ENCODE measurements at regions of chr2 and their contacts with region 1.

Region 1: DNA sequence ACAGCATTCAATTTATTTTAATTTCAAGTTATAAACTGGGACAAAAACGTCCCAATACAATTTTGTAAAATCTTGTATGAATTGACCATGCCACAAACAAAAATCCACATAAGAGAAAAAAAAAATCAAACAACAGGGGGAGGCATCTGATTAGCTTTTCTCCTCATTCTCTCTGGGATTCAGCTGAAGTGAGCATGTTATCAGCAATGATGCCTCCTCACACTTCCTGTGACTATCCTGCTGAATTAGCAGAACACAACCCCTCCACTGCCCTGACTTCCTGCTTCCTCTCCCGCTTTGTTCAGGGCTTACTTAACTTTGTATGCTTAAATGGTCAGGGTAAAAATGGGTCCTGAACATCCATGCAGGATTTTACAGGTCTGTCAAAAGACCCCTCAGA is 132.2 kb upstream of the ITGB6 start:
- DNase-seq: no peak

Region 2: GRCh38 chr2:160317181-160318099 is 14.9 kb before region 1 on chr2:
- intact Hi-C with region 1: no loop called
- DNase-seq: no peak

Region 3: GRCh38 chr2:160472839-160473251 is 140.5 kb after region 1 on chr2:
- intact Hi-C with region 1: loop called in 1 of 2 experiments (anchors 10 kb)
- DNase-seq: no peak

Region 4: GRCh38 chr2:162143969-162144368 is 1811.7 kb after region 1 on chr2:
- intact Hi-C with region 1: no loop called
- DNase-seq: no peak